Heart right ventricle (tissue), 16 donors: ENCODE measurements at regions of chr5 and their contacts with region 1.

Region 1: DNA sequence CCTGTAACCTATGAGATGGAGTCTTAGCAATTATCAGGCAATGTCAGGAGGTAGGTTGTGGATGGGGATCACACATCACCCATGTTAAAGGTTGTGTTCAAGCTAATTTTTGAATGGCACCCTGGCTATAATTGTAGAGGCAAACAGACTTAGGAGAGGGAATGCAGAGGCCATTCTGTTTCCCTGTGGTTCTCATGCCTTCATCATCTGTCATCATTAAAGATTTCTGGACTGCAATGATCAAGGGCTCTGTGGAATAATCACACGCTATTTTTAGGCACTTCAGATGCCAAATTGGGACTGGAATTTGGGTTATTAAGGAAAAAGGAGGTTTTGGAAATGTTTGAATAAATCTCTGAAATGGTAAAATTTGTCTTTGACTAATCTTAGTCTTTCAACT is 1065.4 kb downstream of the TAF11L14 start:
- DNase-seq: no peak
- ATAC-seq: no peak
- H3K4me3 ChIP-seq: no peak overlapping the region
- H3K27ac ChIP-seq: no peak overlapping the region
- H3K4me1 ChIP-seq: peaks cover 0 to 11% (median 0%) of the 10 kb centered on the region in 9 donors
- H3K27me3 ChIP-seq: no peaks in the 10 kb centered on the region
- CTCF ChIP-seq: no peak

Region 2: DNA sequence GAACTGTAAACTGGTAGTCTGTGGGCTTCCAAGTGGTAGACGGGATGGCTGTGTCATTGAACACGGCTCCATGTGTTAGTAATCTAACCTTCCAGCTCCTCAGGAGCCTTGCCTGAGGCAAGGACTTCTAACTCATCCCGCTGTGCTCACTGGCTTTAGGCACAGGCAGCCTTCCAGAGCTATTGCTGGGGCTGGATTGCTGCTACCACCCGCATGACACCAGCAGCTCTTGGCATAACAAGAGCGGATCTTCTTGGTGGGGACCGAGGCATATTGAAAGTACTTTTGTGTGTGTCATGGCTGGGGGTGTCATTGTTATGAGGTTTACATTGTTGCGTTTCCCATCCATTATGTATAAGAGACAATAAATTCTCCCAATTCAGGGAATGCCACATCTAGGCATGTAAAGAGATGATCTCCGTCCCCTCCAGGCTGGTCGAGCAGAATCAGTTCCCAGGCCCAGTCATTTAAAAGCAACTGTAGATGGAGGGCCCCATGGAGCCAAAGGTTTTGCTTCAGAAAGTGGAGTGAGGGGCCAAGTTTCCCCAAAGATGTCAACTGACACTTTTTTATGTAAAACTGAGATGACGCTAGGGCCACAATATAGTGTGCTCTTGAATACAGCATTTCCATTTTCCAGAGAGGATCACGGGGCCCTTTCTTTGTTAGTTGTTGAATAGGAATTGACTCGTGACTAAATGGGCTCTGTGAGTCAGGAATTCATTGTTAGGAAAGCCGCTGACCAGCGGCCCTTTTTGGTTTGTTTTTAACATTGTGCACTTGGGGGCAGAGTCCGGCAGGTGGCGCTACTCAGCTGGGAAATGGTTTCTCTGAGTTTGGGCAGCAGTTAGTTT is 305.9 kb before region 1 on chr5:
- intact Hi-C with region 1: loop called in 1 of 10 experiments (anchors 10 kb)
- DNase-seq: peak in 1 of 2 donors; percentile 24
- ATAC-seq: no peak
- H3K4me3 ChIP-seq: no peak overlapping the region
- H3K27ac ChIP-seq: no peak overlapping the region
- H3K4me1 ChIP-seq: no peaks in the 10 kb centered on the region
- H3K27me3 ChIP-seq: peaks cover 0 to 11% (median 0%) of the 10 kb centered on the region in 7 donors
- CTCF ChIP-seq: peak; percentile 33 to 70 (median 53)

Region 3: DNA sequence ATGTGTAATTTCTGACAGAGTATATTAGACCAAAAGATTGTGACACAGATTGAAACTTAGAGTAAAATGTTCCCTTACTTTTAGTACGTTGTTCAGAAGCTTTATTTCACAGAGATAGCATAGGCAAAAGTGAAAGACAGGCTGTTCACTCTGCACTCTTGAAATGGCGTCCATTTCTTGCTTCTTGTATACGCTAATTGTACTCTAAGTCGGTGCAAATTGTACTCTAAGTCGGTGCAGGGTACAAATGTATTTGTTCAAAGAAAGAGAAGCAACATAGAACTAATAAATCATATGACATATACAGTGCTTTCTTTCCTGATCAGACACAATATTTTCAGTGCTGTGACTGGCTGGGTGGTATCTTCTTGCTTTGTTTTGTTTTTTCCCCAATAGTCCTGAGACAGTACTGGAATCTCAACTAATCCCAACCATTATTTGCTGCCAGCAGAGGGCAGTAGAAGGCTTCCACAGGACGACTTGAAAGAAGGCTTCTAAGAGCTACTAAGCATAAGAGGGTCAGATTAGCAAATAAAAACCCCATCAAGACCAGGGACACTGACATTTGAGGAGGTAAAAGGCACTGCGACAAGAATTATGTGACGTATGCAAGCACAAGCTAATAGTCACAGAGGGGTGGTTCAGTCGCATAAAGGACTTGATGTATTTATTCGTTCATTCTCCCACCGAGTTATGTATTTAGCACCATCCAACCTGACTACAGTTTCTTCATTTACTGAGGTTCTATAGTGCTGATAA is 233.7 kb before region 1 on chr5:
- intact Hi-C with region 1: loop called in 2 of 10 experiments (anchors 5 kb)
- DNase-seq: peak in 1 of 2 donors; percentile 14
- ATAC-seq: no peak
- H3K4me3 ChIP-seq: no peak overlapping the region
- H3K27ac ChIP-seq: no peak overlapping the region
- H3K4me1 ChIP-seq: no peaks in the 10 kb centered on the region
- H3K27me3 ChIP-seq: no peaks in the 10 kb centered on the region
- CTCF ChIP-seq: peak in 8 of 9 donors; percentile 10 to 64 (median 46)

Region 4: GRCh38 chr5:18811661-18812060 is 112.0 kb after region 1 on chr5:
- intact Hi-C with region 1: no loop called
- DNase-seq: no peak
- ATAC-seq: no peak
- H3K4me3 ChIP-seq: no peak overlapping the region
- H3K27ac ChIP-seq: no peak overlapping the region
- H3K4me1 ChIP-seq: no peaks in the 10 kb centered on the region
- H3K27me3 ChIP-seq: no peaks in the 10 kb centered on the region
- CTCF ChIP-seq: no peak